Posterior cingulate gyrus (tissue), 11 donors: ENCODE measurements at regions of chr15 and their contacts with region 1.

Region 1: DNA sequence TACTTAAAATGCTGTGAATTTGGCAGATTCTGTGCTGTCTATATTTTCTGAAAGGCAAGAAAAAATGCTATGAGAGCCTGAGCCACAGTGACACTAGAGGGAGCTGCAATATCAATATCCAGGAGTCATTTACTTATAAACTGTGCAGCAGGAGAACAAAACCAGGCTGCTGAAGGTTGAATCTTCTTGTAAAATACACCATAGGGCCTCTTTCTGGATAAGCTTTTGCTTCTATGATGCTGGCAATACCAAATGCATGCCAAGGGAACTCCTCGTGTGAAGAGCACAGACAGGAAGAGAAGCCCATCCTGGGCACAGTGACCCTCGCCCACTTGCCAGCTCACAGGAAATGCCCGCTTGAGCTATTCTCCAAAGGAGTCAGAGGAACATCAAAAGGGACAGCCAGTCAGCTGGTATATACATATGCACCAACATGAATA is 48.0 kb upstream of the TSPAN3 start:
- DNase-seq: peak in 4 of 10 donors; percentile 25 to 48 (median 30)

Region 2: DNA sequence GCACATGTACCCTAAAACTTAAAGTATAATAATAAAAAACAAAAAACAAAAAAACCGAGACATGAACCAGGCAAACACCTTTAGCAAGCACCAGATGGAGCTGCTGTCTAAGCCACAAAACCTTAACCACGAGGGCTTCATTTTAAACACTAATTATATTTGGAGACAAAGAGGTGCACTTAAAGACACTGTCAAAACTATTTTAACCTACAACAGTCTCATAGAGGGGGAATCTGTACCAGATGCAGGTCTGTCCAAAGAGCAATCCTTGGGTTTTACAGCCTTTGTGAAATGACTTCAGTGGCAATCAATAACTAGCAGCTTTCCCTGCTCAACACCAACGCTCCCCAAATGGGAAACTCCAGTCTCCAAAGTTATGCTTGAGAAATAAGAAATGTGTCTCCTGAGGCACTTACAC is 67.7 kb after region 1 on chr15:
- intact Hi-C with region 1: loop called (anchors 5 kb)
- DNase-seq: no peak